ENCODE measurements at regions of chr4 and their contacts with region 1.

Region 1: GRCh38 chr4:5979976-5980375 is 38.3 kb downstream of the C4orf50 start:
- DNase-seq: no peak
- ATAC-seq: peak in 1 of 4 donors; percentile 28
- H3K4me3 ChIP-seq: no peak overlapping the region
- H3K27ac ChIP-seq: no peak overlapping the region
- H3K4me1 ChIP-seq: no peaks in the 10 kb centered on the region
- H3K27me3 ChIP-seq: peaks cover 0 to 67% (median 24%) of the 10 kb centered on the region in 9 donors
- CTCF ChIP-seq: peak in 10 of 12 donors; percentile 19 to 45 (median 26)
- POLR2A ChIP-seq: no peak

Region 2: DNA sequence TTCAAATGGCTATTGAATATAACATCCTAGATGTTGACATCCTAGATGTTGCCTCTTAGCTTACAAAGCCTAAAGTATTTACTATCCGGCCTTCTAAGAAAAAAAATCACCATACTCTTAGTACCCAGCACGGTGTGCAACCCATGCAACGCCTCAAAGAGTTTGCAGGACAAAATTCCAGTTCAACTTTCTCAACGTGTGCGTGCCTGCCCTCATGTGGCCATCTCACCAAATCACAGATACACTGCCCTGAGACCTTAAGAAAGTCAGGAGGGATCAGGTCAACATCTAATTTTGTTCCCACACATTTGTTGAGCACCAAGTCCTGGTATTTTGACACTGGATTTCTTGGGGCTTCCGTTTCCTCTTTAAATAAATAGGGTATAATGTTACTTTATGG is 155.3 kb before region 1 on chr4:
- intact Hi-C with region 1: loop called in 3 of 10 experiments (anchors 10 kb)
- DNase-seq: no peak
- ATAC-seq: no peak
- H3K4me3 ChIP-seq: no peak overlapping the region
- H3K27ac ChIP-seq: no peak overlapping the region
- H3K4me1 ChIP-seq: peaks cover 0 to 19% (median 12%) of the 10 kb centered on the region in 12 donors
- H3K27me3 ChIP-seq: no peaks in the 10 kb centered on the region
- CTCF ChIP-seq: peak in 10 of 12 donors; percentile 9 to 44 (median 29)
- POLR2A ChIP-seq: no peak

Region 3: DNA sequence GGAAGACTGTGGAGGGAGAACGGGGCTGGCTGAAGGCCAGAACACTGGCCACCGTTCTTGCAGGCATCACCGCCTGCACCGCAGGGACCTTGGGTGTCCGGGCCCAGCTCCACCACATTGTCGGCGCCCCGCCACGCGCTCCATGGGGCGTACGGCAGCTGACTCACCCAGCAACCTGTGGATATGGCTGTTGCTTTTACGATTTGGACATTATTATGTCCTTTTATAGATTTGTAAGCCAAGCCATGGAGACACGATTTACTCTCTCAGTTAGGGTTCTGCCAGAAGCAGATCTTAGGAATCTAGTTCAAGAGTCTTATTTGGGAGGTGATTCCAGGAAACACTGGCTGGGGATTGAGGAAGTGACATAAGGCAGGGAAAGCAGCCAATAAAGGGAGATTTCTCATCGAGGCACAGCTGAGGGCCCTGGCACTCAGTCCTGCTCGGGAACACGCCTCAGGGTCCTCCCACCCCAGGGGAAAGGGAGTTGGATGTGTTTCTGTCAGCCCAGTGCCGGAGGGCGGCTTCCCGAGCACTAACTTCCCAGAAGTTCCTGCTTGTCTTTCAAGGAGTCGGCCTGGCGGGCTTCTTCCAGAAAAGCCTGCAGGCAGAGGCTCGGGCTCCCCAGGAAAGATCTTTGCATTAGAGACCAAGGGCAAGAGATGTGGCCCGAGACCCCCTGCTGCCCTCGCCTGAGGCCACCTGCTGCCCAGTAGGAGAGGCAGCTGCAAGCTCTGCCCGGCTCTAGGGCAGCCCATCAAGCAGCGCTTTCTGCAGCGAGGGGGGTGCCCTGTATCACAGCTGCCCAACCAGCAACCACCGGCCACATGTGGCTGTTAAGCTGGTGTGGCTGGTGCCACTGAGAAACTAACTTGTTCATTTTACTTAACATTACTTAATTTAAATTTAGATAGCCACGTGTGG is 140.0 kb before region 1 on chr4:
- intact Hi-C with region 1: loop called in 1 of 10 experiments (anchors 10 kb)
- DNase-seq: peak; percentile 56 to 86 (median 72)
- ATAC-seq: peak; percentile 63 to 89 (median 86)
- H3K4me3 ChIP-seq: peak overlapping the region in 5 of 12 donors; percentile 0 to 39 (median 25)
- H3K27ac ChIP-seq: peak overlapping the region in 9 of 12 donors; percentile 26 to 70 (median 52)
- H3K4me1 ChIP-seq: peaks cover 0 to 23% (median 11%) of the 10 kb centered on the region in 12 donors
- H3K27me3 ChIP-seq: no peaks in the 10 kb centered on the region
- CTCF ChIP-seq: no peak
- POLR2A ChIP-seq: no peak